IMR-90 (cell line): ENCODE measurements at regions of chr4 and their contacts with region 1.

Region 1: DNA sequence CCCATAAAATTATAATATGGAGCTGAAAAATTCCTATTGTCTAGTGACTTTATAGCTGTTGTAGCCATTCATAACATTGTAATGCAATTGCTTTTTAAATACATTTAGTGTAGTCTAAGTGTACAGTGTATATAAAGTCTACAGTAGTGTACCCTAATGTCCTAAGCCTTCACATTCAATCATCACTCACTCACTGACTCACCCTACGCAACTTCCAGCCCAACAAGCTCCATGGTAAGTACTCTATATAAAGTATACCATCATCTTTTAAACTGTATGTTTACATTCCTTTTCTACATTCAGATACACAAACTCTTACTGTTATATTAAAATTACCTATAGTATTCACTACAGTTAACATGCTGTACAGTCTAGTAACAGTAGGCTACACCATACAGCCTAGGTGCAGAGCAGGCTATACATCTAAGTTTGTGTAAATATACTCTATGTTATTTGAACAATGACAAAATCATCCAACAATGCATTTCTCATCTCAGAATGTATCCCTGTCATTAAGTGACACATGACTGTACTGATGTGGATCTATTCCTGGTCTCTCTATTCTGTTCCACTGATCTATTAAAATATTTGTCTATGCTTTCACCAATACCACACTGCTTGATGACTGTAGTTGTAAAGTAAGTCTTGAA is 33.7 kb downstream of the CLOCK start:
- DNase-seq: peak; percentile 77
- ATAC-seq: peak; percentile 83
- H3K4me3 ChIP-seq: no peak overlapping the region
- H3K27ac ChIP-seq: no peak overlapping the region
- H3K4me1 ChIP-seq: peaks cover 3% of the 10 kb centered on the region; the same call in 1 of the 2 replicates
- H3K27me3 ChIP-seq: no peaks in the 10 kb centered on the region
- CTCF ChIP-seq: no peak
- POLR2A ChIP-seq: no peak
- RAD21 ChIP-seq: no peak

Region 2: GRCh38 chr4:55468724-55469123 is 44.3 kb before region 1 on chr4:
- CTCF ChIA-PET with region 1: interaction called, 4 read pairs
- POLR2A ChIA-PET with region 1: no interaction called
- dilution Hi-C with region 1: no loop called
- in situ Hi-C with region 1: no loop called
- intact Hi-C with region 1: loop called (anchors 5 kb)
- DNase-seq: peak; percentile 88
- ATAC-seq: peak; percentile 67
- H3K4me3 ChIP-seq: no peak overlapping the region
- H3K27ac ChIP-seq: no peak overlapping the region
- H3K4me1 ChIP-seq: no peaks in the 10 kb centered on the region
- H3K27me3 ChIP-seq: no peaks in the 10 kb centered on the region
- CTCF ChIP-seq: no peak
- POLR2A ChIP-seq: no peak
- RAD21 ChIP-seq: no peak